ENCODE measurements at regions of chr9 and their contacts with region 1.

Region 1: GRCh38 chr9:94974154-94974879 is 247.8 kb downstream of the AOPEP start:
- DNase-seq: no peak
- ATAC-seq: peak in 1 of 4 donors; percentile 32
- H3K4me3 ChIP-seq: no peak overlapping the region
- H3K27ac ChIP-seq: no peak overlapping the region
- H3K4me1 ChIP-seq: peaks cover 7% of the 10 kb centered on the region
- H3K27me3 ChIP-seq: no peaks in the 10 kb centered on the region
- CTCF ChIP-seq: no peak

Region 2: DNA sequence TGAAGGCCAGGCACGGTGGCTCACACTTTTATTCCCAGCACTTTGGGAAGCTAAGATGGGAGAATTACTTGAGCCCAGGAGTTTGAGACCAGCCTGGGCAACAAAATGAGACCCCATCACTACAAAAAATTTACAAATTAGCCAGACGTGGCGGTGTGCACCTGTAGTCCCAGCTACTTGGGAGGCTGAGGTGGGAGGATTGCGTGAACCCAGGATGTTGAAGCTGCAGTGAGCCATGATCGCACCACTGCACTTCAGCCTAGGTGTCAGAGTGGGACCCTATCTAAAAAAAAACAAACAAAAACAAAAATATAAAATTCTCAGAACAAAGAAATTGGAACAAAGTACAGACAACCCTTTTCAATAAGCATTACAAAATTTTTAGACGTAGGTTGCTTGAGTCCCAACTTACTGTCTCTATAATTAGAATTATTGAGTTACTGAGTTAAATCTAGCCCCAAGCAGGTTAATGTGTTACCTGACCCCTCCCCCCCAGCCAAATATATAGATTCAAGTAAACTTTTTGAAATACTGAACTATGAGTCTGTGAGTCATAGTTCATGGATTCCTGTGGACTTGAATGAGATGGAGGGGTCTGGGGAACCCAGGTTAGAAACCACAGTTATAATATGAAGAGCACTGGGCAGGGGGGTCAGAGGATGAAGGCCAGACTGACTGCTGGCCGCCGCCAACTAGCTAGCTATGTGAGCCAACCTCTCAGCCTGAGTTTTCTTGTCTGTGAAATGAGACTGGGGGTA is 74.7 kb before region 1 on chr9:
- intact Hi-C with region 1: loop called in 1 of 2 experiments (anchors 2 kb)
- DNase-seq: no peak
- ATAC-seq: no peak
- H3K4me3 ChIP-seq: no peak overlapping the region
- H3K27ac ChIP-seq: peak overlapping the region; percentile 69
- H3K4me1 ChIP-seq: peaks cover 5% of the 10 kb centered on the region
- H3K27me3 ChIP-seq: no peaks in the 10 kb centered on the region
- CTCF ChIP-seq: no peak

Measured in psoas muscle (tissue), 8 donors.